CD4-positive, alpha-beta memory T cell (primary cell): ENCODE measurements at regions of chr18 and their contacts with region 1.

Region 1: DNA sequence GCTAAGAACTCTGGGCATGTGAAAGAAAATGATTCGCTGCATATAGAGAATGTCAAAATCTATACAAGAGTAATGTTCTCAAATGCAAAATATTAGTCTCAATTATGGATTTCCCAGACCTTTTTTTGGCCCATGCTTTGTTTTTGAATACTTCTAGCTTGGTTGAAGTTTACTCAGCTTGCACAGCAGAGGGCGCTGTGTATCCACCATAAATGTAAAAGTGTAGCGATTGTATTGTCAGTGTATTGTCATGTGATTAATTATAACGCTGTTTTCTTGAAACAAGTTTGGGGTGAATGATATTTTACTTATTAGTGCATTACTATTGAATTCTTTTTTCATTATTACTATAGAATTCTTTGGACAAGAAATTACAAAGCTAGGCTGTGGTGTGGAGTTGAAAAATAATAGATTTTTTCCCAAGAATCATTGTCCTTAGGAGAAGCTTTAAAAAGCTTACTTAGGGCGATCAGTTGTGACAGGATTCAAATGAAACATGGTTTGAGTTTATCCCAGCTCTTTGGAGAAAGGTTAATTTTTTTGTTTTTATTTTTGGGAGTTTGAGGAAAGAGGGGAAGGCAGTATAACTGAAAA is 98.3 kb downstream of the PIK3C3 start:
- DNase-seq: peak; percentile 40 to 50 (median 44)
- H3K4me3 ChIP-seq: no peak overlapping the region
- H3K4me3 Mint-ChIP-seq: peak overlapping the region in 1 of 8 donors; percentile 13
- H3K27ac ChIP-seq: no peak overlapping the region
- H3K27ac Mint-ChIP-seq: peak overlapping the region in 2 of 7 donors; percentile 41 to 70
- H3K4me1 ChIP-seq: no peaks in the 10 kb centered on the region
- H3K4me1 Mint-ChIP-seq: peaks cover 6 to 13% (median 8%) of the 10 kb centered on the region in 4 donors
- H3K27me3 ChIP-seq: no peaks in the 10 kb centered on the region
- H3K27me3 Mint-ChIP-seq: no peaks in the 10 kb centered on the region

Region 2: DNA sequence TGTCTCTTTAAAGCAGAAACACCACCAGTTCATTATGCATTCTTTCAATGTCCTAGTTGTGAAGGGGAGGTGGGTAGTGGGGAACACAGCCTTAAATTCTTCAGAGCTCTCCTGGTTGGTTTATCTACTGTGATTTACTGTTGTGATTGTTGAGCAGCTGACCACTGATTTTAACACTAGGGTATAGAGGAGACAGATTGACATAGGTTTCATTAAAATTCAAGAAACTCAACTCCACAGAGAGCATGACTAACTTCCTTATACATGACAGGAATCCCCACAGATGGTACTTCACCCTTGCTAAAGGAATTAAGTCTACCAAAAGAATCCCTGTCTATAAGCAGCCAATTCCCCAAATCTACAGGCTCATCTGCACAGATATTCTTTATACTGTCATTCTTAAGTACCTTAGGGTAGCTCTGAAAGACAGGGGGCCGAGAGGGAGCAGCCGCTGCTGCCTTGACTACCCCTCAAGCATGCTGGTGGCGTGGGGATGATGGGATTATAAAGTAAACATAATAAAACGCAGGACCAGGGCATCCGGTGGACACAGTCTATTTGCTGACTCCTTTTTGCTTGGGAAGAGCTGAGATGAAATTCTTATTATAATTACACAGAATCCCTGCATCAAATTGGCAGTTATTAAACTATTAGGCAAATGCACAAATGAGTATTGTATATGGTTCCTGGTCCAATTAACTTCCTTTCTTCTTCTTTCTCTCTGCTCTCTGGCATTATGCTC is 1475.9 kb before region 1 on chr18:
- CTCF ChIA-PET with region 1: no interaction called
- POLR2A ChIA-PET with region 1: no interaction called
- intact Hi-C with region 1: no loop called
- DNase-seq: no peak
- H3K4me3 ChIP-seq: no peak overlapping the region
- H3K4me3 Mint-ChIP-seq: no peak overlapping the region
- H3K27ac ChIP-seq: no peak overlapping the region
- H3K27ac Mint-ChIP-seq: no peak overlapping the region
- H3K4me1 ChIP-seq: no peaks in the 10 kb centered on the region
- H3K4me1 Mint-ChIP-seq: no peaks in the 10 kb centered on the region
- H3K27me3 ChIP-seq: no peaks in the 10 kb centered on the region
- H3K27me3 Mint-ChIP-seq: no peaks in the 10 kb centered on the region

Region 3: DNA sequence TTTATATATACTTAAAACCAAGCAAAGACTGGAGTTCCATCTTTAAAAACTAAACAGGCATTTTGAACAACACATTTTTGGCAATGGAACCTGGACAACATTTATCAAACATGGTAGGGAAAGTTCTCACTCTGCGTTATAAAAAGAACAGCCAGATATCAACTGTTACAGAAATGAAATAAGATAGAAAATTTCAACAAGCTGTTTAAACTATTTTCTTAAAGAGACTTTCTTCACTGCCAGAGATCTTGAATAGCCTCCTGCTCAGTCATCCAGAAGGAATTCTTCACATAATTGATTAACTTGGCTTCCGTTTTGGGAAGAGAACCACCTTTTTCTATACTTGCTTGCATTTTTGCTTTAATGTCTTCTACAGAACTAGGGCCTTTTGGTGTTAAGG is 264.3 kb before region 1 on chr18:
- CTCF ChIA-PET with region 1: no interaction called
- POLR2A ChIA-PET with region 1: no interaction called
- intact Hi-C with region 1: no loop called
- DNase-seq: no peak
- H3K4me3 ChIP-seq: no peak overlapping the region
- H3K4me3 Mint-ChIP-seq: no peak overlapping the region
- H3K27ac ChIP-seq: no peak overlapping the region
- H3K27ac Mint-ChIP-seq: no peak overlapping the region
- H3K4me1 ChIP-seq: no peaks in the 10 kb centered on the region
- H3K4me1 Mint-ChIP-seq: no peaks in the 10 kb centered on the region
- H3K27me3 ChIP-seq: no peaks in the 10 kb centered on the region
- H3K27me3 Mint-ChIP-seq: no peaks in the 10 kb centered on the region

Region 4: GRCh38 chr18:41906528-41907146 is 146.6 kb before region 1 on chr18:
- CTCF ChIA-PET with region 1: no interaction called
- POLR2A ChIA-PET with region 1: no interaction called
- intact Hi-C with region 1: no loop called
- DNase-seq: peak; percentile 57 to 73 (median 67)
- H3K4me3 ChIP-seq: no peak overlapping the region
- H3K4me3 Mint-ChIP-seq: peak overlapping the region in 7 of 8 donors; percentile 22 to 81 (median 60)
- H3K27ac ChIP-seq: no peak overlapping the region
- H3K27ac Mint-ChIP-seq: peak overlapping the region in 6 of 7 donors; percentile 23 to 70 (median 34)
- H3K4me1 ChIP-seq: peaks cover 7% of the 10 kb centered on the region
- H3K4me1 Mint-ChIP-seq: peaks cover 4 to 9% (median 9%) of the 10 kb centered on the region in 4 donors
- H3K27me3 ChIP-seq: no peaks in the 10 kb centered on the region
- H3K27me3 Mint-ChIP-seq: no peaks in the 10 kb centered on the region

Region 5: DNA sequence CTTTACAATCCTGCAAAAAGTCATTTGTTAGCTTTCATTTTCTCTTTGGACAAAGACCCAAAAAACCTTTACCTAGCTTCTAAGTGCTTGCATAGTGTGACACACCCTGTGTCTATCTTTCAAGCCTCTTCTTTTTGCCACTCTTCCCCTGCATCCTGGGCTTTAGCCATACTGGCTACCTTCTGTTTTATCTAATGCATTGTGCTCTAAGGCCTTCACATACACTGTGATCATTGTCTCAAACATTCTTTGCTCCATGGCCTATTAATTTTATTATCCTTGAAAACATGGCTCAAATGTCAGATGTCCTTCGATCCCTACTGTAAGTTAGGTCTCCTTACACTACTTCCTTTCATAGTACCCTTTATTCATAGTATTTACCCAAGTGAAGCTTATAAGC is 13.9 kb before region 1 on chr18:
- CTCF ChIA-PET with region 1: interaction called, 13 read pairs
- POLR2A ChIA-PET with region 1: no interaction called
- intact Hi-C with region 1: no loop called
- DNase-seq: no peak
- H3K4me3 ChIP-seq: no peak overlapping the region
- H3K4me3 Mint-ChIP-seq: no peak overlapping the region
- H3K27ac ChIP-seq: no peak overlapping the region
- H3K27ac Mint-ChIP-seq: peak overlapping the region in 2 of 7 donors; percentile 6 to 89
- H3K4me1 ChIP-seq: no peaks in the 10 kb centered on the region
- H3K4me1 Mint-ChIP-seq: peaks cover 0 to 7% (median 3%) of the 10 kb centered on the region in 4 donors
- H3K27me3 ChIP-seq: no peaks in the 10 kb centered on the region
- H3K27me3 Mint-ChIP-seq: no peaks in the 10 kb centered on the region

Region 6: DNA sequence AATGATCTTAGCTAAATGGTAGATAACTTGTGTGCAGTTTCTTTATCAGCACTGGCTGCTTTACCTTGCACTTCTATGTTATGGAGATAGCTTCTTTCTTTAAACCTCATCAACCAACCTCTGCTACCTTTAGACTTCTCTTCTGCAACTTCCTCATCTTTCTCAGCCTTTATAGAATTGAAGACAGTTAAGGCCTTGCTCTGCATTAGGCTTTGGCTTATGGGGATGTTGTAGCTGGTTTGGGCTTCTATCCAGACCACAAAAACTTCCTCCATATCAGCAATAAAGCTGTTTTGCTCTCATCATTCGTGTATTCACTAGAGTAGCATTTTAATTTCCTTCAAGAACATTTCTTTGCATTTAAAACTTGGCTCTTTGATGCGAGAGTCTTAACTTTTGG is 25.4 kb after region 1 on chr18:
- CTCF ChIA-PET with region 1: interaction called, 11 read pairs
- POLR2A ChIA-PET with region 1: no interaction called
- intact Hi-C with region 1: no loop called
- DNase-seq: no peak
- H3K4me3 ChIP-seq: no peak overlapping the region
- H3K4me3 Mint-ChIP-seq: no peak overlapping the region
- H3K27ac ChIP-seq: no peak overlapping the region
- H3K27ac Mint-ChIP-seq: peak overlapping the region in 1 of 7 donors; percentile 3
- H3K4me1 ChIP-seq: no peaks in the 10 kb centered on the region
- H3K4me1 Mint-ChIP-seq: peaks cover 4 to 10% (median 6%) of the 10 kb centered on the region in 4 donors
- H3K27me3 ChIP-seq: no peaks in the 10 kb centered on the region
- H3K27me3 Mint-ChIP-seq: no peaks in the 10 kb centered on the region

Region 7: DNA sequence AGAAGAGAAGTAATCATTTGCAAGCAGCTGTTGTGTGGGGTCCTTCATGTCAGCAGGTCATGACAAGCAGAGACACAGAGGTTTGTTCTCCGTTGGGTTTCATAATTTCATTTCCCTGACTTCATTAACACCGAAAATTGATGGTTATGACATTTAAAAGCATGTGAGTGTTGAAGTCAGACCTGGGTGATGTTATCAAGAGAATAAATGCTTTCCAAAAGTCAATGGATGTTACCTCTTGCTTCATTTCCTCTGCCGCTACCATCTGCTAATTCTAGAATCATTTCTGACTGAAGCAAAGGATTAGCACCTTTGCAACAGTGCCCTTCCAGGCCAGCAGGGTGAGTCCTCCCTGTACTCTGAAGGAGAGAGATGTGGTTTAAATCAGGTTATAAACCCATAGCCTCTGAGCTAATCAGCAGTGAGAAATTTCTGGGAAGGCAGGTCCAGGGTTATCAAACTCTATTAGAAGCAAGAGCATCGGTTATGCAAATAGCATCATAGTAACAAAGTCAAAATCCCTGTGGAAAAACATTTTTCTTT is 347.9 kb after region 1 on chr18:
- CTCF ChIA-PET with region 1: no interaction called
- POLR2A ChIA-PET with region 1: no interaction called
- intact Hi-C with region 1: no loop called
- DNase-seq: no peak
- H3K4me3 ChIP-seq: no peak overlapping the region
- H3K4me3 Mint-ChIP-seq: no peak overlapping the region
- H3K27ac ChIP-seq: no peak overlapping the region
- H3K27ac Mint-ChIP-seq: no peak overlapping the region
- H3K4me1 ChIP-seq: no peaks in the 10 kb centered on the region
- H3K4me1 Mint-ChIP-seq: no peaks in the 10 kb centered on the region
- H3K27me3 ChIP-seq: no peaks in the 10 kb centered on the region
- H3K27me3 Mint-ChIP-seq: peaks cover 0 to 2% of the 10 kb centered on the region in 2 donors

Region 8: DNA sequence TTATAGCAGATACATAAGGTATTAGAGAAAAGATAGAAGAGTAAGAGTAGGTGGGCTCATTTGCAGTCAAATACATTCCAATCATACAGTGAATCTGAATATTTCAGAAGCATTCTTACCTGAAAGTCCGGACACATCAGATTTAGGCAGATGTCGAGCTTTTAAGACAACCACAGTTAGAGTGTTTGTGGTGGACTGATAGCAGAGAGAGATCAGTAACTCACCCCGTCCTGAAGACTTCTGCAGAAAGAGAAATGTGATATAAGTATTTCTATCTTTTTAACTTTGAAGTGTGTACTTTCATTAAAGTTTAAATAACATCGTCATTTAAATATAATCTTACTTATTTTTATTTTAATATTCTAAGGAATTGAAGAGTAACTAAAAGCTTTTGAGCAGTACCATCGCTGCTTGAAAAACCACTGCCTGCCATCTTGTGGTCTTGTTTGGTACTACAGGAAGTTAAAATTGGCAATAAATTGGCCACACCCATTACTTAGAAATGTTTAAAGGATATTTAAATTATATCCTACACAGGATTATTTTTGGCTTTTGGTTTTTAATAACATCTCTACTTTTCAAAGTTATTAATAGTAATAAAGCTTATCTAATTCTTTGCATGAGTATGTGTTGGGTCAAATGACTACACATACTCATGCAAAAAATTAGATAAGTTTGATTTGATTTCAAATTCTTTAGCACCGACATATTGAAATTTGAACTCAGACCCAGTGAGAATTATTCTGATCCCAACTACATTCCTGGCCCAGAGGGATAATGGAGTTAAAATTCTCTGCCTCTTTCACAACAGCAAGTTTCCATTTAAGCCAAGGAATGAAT is 1218.5 kb after region 1 on chr18:
- CTCF ChIA-PET with region 1: no interaction called
- POLR2A ChIA-PET with region 1: no interaction called
- intact Hi-C with region 1: loop called (anchors 5 kb)
- DNase-seq: peak in 3 of 5 donors; percentile 9 to 20 (median 14)
- H3K4me3 ChIP-seq: no peak overlapping the region
- H3K4me3 Mint-ChIP-seq: no peak overlapping the region
- H3K27ac ChIP-seq: no peak overlapping the region
- H3K27ac Mint-ChIP-seq: no peak overlapping the region
- H3K4me1 ChIP-seq: no peaks in the 10 kb centered on the region
- H3K4me1 Mint-ChIP-seq: peaks cover 0 to 2% (median under 1%) of the 10 kb centered on the region in 4 donors
- H3K27me3 ChIP-seq: no peaks in the 10 kb centered on the region
- H3K27me3 Mint-ChIP-seq: peaks cover 0 to 2% of the 10 kb centered on the region in 2 donors